Activated naive CD8-positive, alpha-beta T cell treated with anti-CD3 and anti-CD28 coated beads, Interleukin-2, amount 10 ng/mL, durations not matched to agents 7 days and 5 days (primary cell): ENCODE measurements at regions of chr12 and their contacts with region 1.

Region 1: GRCh38 chr12:56104109-56104814 is at the start of gene PA2G4:
- DNase-seq: peak; percentile 97
- ATAC-seq: peak; percentile 92
- H3K4me3 Mint-ChIP-seq: peak within 1 kb of the TSS; percentile 90
- H3K27ac Mint-ChIP-seq: peak within 1 kb of the TSS; percentile 95
- H3K4me1 Mint-ChIP-seq: peaks cover 46% of the 10 kb centered on the region
- H3K27me3 Mint-ChIP-seq: no peaks in the 10 kb centered on the region
- total RNA-seq, gene PA2G4: 226 to 227 TPM

Region 2: DNA sequence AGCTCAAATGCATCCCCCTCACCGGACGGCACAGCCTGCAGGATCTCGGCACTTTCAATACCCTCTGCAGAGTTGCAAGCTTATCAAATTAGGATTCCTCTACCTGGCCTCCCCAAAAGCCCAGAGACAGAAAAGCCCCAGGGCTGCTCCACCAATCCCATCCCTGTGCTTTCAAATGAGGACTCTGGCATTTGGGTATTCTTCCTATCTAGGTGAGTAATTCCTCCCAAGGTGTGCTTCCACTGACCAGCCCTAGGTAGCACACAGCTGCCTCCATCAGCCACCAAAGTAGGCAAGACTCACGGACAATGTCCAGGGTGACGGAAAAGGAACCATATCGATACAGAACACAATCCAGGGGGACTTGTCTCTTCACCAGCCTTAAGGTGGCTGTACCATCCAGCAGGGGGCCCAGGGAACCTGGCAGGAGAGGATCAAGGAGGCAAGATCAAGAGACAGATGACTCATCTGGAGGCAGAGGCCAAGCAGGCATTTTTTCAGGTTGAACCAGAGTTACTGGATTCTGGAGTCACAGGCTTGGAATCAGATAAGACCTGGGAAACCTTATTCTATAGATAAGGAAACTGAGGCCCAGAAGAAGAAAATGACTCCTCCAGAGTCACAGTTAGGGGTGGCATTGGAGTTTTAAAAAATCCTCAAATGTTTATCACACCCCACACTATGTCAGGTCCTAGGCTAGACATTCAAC is 148.3 kb before region 1 on chr12:
- POLR2A ChIA-PET with region 1: no interaction called
- DNase-seq: peak; percentile 48
- ATAC-seq: peak; percentile 69
- H3K4me3 Mint-ChIP-seq: no peak overlapping the region
- H3K27ac Mint-ChIP-seq: peak overlapping the region; percentile 2
- H3K4me1 Mint-ChIP-seq: peaks cover 13% of the 10 kb centered on the region
- H3K27me3 Mint-ChIP-seq: no peaks in the 10 kb centered on the region

Region 3: DNA sequence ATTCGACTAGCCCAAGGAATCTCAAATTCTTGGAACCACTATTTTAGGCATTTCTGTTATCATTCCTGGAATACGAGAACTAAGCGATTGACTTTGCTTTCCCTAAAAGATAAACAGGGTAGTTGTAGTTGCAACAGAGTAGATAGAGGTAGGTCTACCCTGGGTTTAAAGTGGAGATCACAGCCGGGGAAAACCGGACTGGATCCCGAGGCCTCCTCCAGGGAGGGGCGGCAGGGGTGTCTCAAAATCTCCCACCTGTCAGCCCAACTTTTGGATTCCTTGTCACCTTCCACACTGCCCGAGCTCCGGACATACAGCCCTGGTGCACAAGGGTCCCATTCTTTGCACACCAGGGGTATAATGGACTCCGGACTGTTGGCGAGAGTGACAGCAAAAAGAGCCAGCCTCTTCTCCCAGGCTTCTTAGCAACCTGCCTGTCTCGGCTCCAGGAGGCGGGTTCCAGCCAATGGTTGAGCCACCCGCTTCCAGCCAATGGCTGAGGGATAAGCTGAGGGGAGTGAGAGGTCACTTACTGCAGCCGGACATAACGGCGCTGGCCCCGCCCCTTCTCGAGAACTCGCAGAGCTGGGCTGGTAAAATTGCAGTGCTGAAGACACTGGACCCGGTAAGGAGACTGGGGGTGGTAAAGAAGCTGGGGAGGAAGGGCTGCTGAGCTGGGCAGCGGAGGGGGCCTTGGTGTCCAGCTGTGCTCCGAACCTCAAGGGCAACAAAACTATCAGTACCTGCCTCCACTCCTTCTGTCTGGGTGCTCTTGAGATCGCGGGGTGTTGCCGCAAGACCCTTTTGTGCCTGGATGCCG is 107.3 kb before region 1 on chr12 and contains the start of gene SUOX:
- POLR2A ChIA-PET with region 1: interaction called, 14 read pairs
- DNase-seq: peak; percentile 55
- ATAC-seq: peak; percentile 87
- H3K4me3 Mint-ChIP-seq: peak within 1 kb of the TSS; percentile 86
- H3K27ac Mint-ChIP-seq: peak within 1 kb of the TSS; percentile 56
- H3K4me1 Mint-ChIP-seq: peaks cover 21% of the 10 kb centered on the region
- H3K27me3 Mint-ChIP-seq: peaks cover 2% of the 10 kb centered on the region
- total RNA-seq, gene SUOX: 8.1 to 11.4 TPM

Region 4: GRCh38 chr12:56041552-56042429 is 62.5 kb before region 1 on chr12 and contains the start of gene RPS26:
- POLR2A ChIA-PET with region 1: interaction called, 19 read pairs
- DNase-seq: peak; percentile 85
- ATAC-seq: peak; percentile 94
- H3K4me3 Mint-ChIP-seq: peak within 1 kb of the TSS; percentile 93
- H3K27ac Mint-ChIP-seq: peak within 1 kb of the TSS; percentile 94
- H3K4me1 Mint-ChIP-seq: peaks cover 33% of the 10 kb centered on the region
- H3K27me3 Mint-ChIP-seq: no peaks in the 10 kb centered on the region
- total RNA-seq, gene RPS26: 39.1 to 42.6 TPM

Region 5: GRCh38 chr12:56084958-56085543 is 19.2 kb before region 1 on chr12:
- POLR2A ChIA-PET with region 1: interaction called, 47 read pairs
- DNase-seq: peak; percentile 47
- ATAC-seq: peak; percentile 59
- H3K4me3 Mint-ChIP-seq: no peak overlapping the region
- H3K27ac Mint-ChIP-seq: no peak overlapping the region
- H3K4me1 Mint-ChIP-seq: peaks cover 15% of the 10 kb centered on the region
- H3K27me3 Mint-ChIP-seq: peaks cover 20% of the 10 kb centered on the region

Region 6: GRCh38 chr12:56127888-56128669 is 23.8 kb after region 1 on chr12 and contains the start of gene ESYT1:
- POLR2A ChIA-PET with region 1: interaction called, 17 read pairs
- DNase-seq: peak; percentile 91
- ATAC-seq: peak; percentile 89
- H3K4me3 Mint-ChIP-seq: peak within 1 kb of the TSS; percentile 100
- H3K27ac Mint-ChIP-seq: peak within 1 kb of the TSS; percentile 97
- H3K4me1 Mint-ChIP-seq: peaks cover 55% of the 10 kb centered on the region
- H3K27me3 Mint-ChIP-seq: no peaks in the 10 kb centered on the region
- total RNA-seq, gene ESYT1: 251 TPM